CD4-positive, alpha-beta memory T cell (primary cell): ENCODE measurements at regions of chr2 and their contacts with region 1.

Region 1: DNA sequence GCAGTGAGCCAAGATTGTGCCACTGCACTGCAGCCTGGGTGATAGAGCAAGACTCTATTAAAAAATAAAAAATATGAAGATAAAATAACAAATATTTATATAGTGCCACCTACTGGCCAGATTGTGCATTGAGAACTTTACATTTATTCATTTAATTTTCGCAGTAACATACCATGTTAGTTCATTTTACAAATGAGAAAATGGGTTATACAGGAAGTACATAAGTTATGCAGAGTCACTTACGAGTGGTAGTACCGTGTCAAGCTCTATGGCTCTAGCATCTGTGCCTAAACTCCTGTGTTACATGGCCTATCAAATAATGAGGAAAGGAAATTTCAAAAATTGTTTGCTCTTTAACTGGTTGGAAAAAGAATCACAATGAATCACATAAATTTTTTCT is 27.9 kb downstream of the RIF1 start:
- DNase-seq: peak in 4 of 5 donors; percentile 23 to 41 (median 32)
- H3K4me3 ChIP-seq: no peak overlapping the region
- H3K4me3 Mint-ChIP-seq: no peak overlapping the region
- H3K27ac ChIP-seq: no peak overlapping the region
- H3K27ac Mint-ChIP-seq: peak overlapping the region in 5 of 7 donors; percentile 36 to 81 (median 61)
- H3K4me1 ChIP-seq: no peaks in the 10 kb centered on the region
- H3K4me1 Mint-ChIP-seq: peaks cover 3 to 9% (median 6%) of the 10 kb centered on the region in 4 donors
- H3K27me3 ChIP-seq: no peaks in the 10 kb centered on the region
- H3K27me3 Mint-ChIP-seq: no peaks in the 10 kb centered on the region

Region 2: DNA sequence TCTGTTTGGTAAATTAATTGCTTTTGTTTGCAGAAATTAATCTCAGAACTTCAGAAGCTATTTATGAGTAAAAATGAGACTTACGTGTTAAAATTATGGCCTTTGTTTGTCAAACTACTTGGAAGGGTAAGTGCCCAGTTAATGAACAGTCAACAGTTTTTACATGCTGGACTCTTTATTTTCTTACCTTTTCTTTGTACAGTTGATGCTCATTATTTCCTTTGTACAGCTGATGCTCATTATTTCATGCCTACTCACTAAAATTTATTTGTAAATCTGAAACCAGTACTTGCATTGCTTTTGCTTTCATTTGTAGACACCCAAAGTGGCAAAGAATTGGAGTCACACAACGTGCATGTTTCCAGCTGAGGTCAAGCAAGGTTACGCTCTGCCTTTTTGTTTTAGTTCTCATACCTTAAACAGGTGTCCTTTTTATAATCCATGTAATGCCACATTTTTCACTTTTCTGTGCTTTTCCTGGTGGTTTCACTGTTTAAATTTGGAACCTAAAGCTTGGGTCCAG is 14.7 kb before region 1 on chr2:
- CTCF ChIA-PET with region 1: interaction called, 41 read pairs
- POLR2A ChIA-PET with region 1: no interaction called
- intact Hi-C with region 1: no loop called
- DNase-seq: no peak
- H3K4me3 ChIP-seq: no peak overlapping the region
- H3K4me3 Mint-ChIP-seq: peak overlapping the region in 3 of 8 donors; percentile 1 to 18 (median 8)
- H3K27ac ChIP-seq: peak overlapping the region; percentile 33
- H3K27ac Mint-ChIP-seq: peak overlapping the region in 6 of 7 donors; percentile 11 to 95 (median 88)
- H3K4me1 ChIP-seq: peaks cover 29% of the 10 kb centered on the region
- H3K4me1 Mint-ChIP-seq: peaks cover 30 to 44% (median 36%) of the 10 kb centered on the region in 4 donors
- H3K27me3 ChIP-seq: no peaks in the 10 kb centered on the region
- H3K27me3 Mint-ChIP-seq: no peaks in the 10 kb centered on the region

Region 3: DNA sequence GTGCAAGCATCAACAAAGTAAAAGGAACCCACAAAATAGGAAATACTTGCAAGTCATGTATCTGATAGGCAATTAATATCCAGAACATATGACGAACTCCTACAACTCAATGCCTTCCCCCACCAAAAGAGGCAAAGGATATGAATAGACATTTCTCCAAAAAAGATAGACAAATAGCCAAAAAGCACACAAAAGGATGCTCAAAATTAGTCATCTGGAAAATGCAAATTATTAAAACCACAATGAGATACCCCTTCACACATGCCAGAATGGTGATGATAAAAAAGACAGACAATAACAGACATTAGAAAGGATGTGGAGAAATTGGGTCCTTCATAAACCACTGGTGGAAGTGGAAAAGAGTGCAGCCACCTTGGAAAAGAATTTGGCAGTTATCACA is 48.4 kb after region 1 on chr2:
- CTCF ChIA-PET with region 1: no interaction called
- POLR2A ChIA-PET with region 1: no interaction called
- intact Hi-C with region 1: no loop called
- DNase-seq: no peak
- H3K4me3 ChIP-seq: no peak overlapping the region
- H3K4me3 Mint-ChIP-seq: no peak overlapping the region
- H3K27ac ChIP-seq: no peak overlapping the region
- H3K27ac Mint-ChIP-seq: no peak overlapping the region
- H3K4me1 ChIP-seq: no peaks in the 10 kb centered on the region
- H3K4me1 Mint-ChIP-seq: peaks cover 0 to 4% (median under 1%) of the 10 kb centered on the region in 4 donors
- H3K27me3 ChIP-seq: no peaks in the 10 kb centered on the region
- H3K27me3 Mint-ChIP-seq: no peaks in the 10 kb centered on the region

Region 4: DNA sequence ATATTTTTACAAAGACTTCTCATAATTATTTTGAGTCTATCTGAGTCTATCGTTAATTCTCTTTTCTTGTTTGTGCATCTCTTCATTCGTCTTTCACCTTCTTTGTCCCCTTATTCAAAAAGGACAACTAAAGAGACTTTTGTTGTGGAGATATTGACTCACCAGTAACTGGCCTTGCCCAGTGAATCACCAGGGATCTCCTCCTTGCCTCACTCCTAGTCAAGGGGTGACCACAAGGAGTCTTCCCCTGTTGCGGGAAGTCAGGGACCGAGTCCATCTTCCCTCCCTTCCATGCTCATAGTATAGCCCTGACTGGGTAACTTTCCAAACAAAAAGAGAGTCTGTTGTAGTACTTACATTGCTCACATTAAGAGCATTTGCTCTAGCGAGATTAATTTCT is 137.7 kb after region 1 on chr2:
- CTCF ChIA-PET with region 1: no interaction called
- POLR2A ChIA-PET with region 1: no interaction called
- intact Hi-C with region 1: no loop called
- DNase-seq: no peak
- H3K4me3 ChIP-seq: no peak overlapping the region
- H3K4me3 Mint-ChIP-seq: no peak overlapping the region
- H3K27ac ChIP-seq: no peak overlapping the region
- H3K27ac Mint-ChIP-seq: no peak overlapping the region
- H3K4me1 ChIP-seq: no peaks in the 10 kb centered on the region
- H3K4me1 Mint-ChIP-seq: no peaks in the 10 kb centered on the region
- H3K27me3 ChIP-seq: no peaks in the 10 kb centered on the region
- H3K27me3 Mint-ChIP-seq: peaks cover 2% of the 10 kb centered on the region in 2 donors